MCF 10A (cell line): ENCODE measurements at regions of chr12 and their contacts with region 1.

Region 1: DNA sequence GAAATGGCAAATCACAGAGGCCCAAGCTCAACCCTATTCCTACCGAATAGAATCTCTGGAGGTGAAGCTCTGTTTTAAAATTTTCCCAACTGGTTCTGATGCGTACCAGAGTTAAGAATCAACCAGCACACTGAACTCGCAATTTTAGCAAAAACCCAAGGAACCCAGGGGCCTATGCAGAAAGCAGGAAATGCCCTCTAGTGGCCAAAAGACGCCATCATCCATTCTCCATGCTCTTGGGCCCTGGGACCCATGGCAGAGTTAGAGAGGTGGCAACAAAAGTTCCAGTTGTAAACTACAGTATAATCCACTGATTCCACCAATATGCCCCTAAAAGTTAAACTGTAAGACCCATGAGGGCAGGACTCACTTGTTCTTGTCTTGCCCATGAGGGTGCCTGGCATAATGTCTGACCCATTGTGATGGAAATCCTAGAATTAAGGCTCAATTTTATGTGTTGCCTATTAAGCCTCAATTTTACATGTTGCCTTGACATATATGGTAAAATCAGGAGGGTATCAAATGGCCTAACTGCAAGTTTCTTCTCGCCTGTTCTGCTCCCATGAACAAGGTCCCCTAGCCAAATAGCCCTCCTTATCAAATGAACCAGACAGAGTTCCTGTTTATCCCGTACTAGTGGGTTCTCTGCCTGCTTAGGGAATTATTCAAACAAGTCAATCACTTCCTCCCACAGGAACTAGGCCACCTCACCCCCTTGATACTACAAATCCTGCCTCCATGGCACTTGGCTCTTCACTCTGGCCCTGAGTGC is 137.5 kb upstream of the CPM start:
- DNase-seq: peak; percentile 79
- H3K4me3 Mint-ChIP-seq: no peak overlapping the region
- H3K27ac Mint-ChIP-seq: no peak overlapping the region
- H3K4me1 Mint-ChIP-seq: peaks cover 24% of the 10 kb centered on the region
- H3K27me3 Mint-ChIP-seq: no peaks in the 10 kb centered on the region
- CTCF ChIP-seq: peak; percentile 92

Region 2: DNA sequence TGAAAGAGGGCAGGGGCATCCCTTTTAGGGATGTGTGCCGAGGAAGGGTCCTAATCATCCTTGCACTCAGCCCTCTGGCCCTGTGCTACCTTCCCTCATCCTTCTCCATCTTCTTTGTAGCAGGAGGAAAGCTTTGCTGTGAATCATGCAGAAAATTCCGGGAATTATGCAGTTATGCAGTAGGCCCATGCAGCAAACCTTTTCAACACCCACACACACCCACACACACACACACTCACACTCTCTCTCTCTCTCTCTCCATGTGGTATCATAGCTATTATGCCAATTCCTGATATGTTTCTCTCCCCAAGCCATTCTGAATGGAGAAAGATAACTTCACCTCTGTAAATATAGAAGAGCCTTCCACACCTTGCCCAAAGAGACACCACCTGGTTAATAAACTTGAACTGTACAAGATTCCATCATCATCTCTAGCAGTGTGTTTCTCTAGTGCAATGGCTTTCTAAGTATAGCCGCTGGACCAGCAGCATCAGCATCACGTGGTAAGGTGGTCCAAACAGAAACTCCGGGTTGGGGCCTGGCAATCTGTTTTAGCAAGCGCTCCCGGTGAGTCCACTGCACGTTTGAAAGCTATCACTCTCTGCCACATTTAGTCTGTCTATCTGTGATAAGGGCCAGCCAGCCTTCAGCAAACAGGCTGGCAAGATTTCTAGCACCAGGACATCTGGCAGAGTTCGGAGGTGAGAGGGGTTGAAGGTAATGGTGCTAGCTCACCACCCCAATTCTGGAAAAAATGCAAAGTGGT is 204.9 kb before region 1 on chr12:
- CTCF ChIA-PET with region 1: interaction called, 14 read pairs
- POLR2A ChIA-PET with region 1: interaction called, 3 read pairs
- intact Hi-C with region 1: loop called (anchors 1 kb)
- DNase-seq: no peak
- H3K4me3 Mint-ChIP-seq: no peak overlapping the region
- H3K27ac Mint-ChIP-seq: no peak overlapping the region
- H3K4me1 Mint-ChIP-seq: no peaks in the 10 kb centered on the region
- H3K27me3 Mint-ChIP-seq: no peaks in the 10 kb centered on the region
- CTCF ChIP-seq: no peak

Region 3: GRCh38 chr12:68899251-68899771 is 171.2 kb before region 1 on chr12:
- CTCF ChIA-PET with region 1: interaction called, 87 read pairs
- POLR2A ChIA-PET with region 1: interaction called, 12 read pairs
- intact Hi-C with region 1: loop called (anchors 1 kb)
- DNase-seq: peak; percentile 84
- H3K4me3 Mint-ChIP-seq: no peak overlapping the region
- H3K27ac Mint-ChIP-seq: peak overlapping the region; percentile 72
- H3K4me1 Mint-ChIP-seq: peaks cover 8% of the 10 kb centered on the region
- H3K27me3 Mint-ChIP-seq: no peaks in the 10 kb centered on the region
- CTCF ChIP-seq: peak; percentile 78

Region 4: DNA sequence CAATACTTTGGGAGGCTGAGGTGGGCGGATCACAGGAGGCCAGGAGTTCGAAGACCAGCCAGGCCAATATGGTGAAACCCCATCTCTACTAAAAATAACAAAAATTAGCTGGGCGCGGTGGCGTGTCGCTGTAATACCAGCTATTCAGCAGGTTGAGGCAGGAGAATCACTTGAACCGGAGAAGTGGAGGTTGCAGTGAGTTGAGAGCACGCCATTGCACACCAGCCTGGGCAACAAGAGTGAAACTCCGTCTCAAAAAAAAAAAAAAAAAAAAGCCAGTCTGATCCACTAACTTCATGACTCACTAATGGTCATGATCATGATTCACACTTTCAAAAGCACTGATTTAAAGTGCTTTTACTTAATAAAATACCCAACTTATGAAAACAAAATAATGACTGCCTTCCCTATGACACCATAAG is 99.1 kb before region 1 on chr12:
- CTCF ChIA-PET with region 1: interaction called, 4 read pairs
- POLR2A ChIA-PET with region 1: interaction called, 6 read pairs
- intact Hi-C with region 1: loop called (anchors 2 kb)
- DNase-seq: peak; percentile 60
- H3K4me3 Mint-ChIP-seq: peak overlapping the region; percentile 58
- H3K27ac Mint-ChIP-seq: peak overlapping the region; percentile 19
- H3K4me1 Mint-ChIP-seq: peaks cover 17% of the 10 kb centered on the region
- H3K27me3 Mint-ChIP-seq: no peaks in the 10 kb centered on the region
- CTCF ChIP-seq: no peak

Region 5: DNA sequence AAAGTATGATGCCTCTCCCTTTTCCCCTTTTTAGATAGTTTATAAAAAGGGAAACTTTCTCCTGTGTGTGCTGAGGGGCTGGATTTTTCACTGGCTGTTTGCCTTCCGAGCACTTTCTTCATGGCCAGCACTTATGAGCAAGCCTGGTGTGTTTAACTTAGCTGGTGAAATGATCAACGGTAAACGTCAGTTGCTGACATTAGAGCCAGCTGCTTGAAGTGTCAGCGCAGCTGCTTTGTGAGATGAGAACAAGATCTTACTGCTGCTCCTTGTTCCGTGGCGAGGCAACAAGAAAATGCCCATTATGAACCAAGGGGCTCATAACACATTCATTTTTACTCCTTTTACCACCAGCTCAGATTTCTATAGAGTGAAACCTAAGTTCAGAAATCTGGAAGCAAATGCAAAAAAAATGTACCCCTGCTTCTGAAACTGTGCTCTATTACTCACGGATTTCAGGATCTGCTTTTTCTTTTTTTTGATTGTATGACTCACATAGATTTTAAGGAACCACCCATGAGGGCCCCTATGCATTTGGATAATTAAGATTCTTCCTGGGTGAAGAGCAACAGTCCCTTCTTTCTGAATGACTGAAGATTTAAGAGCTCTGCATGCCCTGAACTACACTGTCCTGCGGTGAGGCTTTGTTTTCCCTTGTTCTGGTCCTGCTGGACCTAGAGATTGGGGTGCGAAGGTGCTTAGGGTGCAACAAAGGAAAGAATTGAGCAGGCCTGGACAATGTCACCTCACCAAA is 63.2 kb before region 1 on chr12:
- CTCF ChIA-PET with region 1: interaction called, 10 read pairs
- POLR2A ChIA-PET with region 1: interaction called, 10 read pairs
- intact Hi-C with region 1: no loop called
- DNase-seq: peak; percentile 53
- H3K4me3 Mint-ChIP-seq: peak overlapping the region; percentile 39
- H3K27ac Mint-ChIP-seq: peak overlapping the region; percentile 82
- H3K4me1 Mint-ChIP-seq: peaks cover 24% of the 10 kb centered on the region
- H3K27me3 Mint-ChIP-seq: no peaks in the 10 kb centered on the region
- CTCF ChIP-seq: no peak

Region 6: DNA sequence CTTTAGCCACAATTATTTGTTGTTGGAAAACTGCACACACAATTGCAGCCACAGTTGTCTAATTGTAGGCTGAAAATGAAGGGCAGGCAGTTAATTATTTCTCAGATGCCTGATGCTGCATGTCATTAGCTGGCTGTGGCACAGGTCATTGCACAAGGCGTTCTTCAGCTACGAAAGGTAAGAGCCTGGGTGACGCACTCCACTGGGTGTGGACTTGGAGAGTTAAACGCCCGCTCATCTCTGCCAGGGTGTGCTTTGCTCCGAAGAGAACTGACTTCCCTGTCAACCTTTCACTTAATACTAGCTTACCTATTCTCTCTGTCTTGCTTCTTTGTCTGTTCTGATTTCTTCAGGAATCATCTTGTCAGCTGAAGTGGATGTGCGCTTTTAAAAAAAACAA is 46.1 kb before region 1 on chr12:
- CTCF ChIA-PET with region 1: interaction called, 5 read pairs
- POLR2A ChIA-PET with region 1: interaction called, 12 read pairs
- intact Hi-C with region 1: loop called (anchors 5 kb)
- DNase-seq: peak; percentile 96
- H3K4me3 Mint-ChIP-seq: peak overlapping the region; percentile 61
- H3K27ac Mint-ChIP-seq: peak overlapping the region; percentile 88
- H3K4me1 Mint-ChIP-seq: peaks cover 35% of the 10 kb centered on the region
- H3K27me3 Mint-ChIP-seq: no peaks in the 10 kb centered on the region
- CTCF ChIP-seq: no peak

Region 7: DNA sequence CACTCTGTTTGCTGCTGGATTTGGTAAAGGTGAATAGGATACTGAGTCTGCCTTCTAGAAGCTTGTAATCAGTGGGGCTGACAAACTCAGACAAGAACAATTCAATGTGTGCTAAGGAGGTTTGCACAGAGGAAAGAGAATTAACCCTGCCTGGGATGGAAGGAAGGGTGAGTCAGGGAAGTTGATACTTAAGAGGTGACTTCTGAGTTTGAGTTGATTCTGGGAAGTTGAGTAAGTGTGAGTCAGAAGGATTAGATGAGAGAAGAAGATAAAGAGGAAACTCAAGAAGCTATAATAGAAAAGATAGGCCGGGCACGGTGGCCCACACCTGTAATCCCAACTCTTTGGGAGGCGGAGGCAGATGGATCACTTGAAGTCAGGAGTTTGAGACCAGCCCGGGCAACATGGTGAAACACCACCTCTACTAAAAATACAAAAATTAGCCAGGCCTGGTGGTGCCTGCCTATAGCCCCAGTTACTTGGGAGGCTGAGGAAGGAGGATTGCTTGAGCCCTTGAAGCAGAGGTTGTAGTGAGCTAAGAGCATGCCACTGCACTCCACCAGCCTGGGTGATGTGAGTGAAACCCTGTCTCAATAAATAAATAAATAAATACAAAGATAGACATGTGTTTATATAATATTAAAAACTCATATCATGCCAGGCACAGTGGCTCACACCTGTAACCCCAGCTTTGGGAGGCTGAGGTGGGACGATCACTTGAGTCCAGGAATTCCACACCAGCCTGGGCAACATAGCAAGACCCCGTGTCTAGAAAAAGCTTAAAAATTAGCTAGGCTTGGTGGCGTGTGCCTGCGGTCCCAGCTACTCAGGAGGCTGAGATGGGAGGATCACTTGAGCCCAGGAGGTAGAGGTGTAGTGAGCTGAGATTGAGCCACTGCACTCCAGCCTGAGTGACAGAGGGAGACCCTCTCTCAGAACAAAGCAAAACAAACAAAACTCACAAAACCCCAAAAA is 10.7 kb before region 1 on chr12:
- CTCF ChIA-PET with region 1: interaction called, 14 read pairs
- POLR2A ChIA-PET with region 1: interaction called, 4 read pairs
- intact Hi-C with region 1: no loop called
- DNase-seq: peak; percentile 93
- H3K4me3 Mint-ChIP-seq: no peak overlapping the region
- H3K27ac Mint-ChIP-seq: peak overlapping the region; percentile 14
- H3K4me1 Mint-ChIP-seq: peaks cover 15% of the 10 kb centered on the region
- H3K27me3 Mint-ChIP-seq: no peaks in the 10 kb centered on the region
- CTCF ChIP-seq: no peak

Region 8: DNA sequence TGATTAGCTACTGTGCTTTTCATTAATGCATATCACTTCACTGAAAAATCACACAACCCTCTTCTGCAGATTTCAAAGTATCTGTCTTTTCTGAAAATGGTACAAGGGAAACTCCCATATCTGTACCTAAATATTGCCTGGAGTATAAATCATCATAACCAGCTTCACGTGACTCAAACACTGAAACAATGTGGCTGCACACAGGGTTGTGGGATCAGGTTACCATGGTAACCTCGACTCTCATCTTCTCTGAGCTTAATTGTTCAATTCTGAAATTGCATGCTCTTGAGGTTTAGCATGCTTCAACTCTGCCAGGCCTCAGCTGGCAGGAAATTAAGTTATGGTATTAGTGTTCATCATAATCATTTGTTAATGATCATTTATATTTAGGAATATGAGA is 91.3 kb after region 1 on chr12:
- CTCF ChIA-PET with region 1: no interaction called
- POLR2A ChIA-PET with region 1: no interaction called
- intact Hi-C with region 1: no loop called
- DNase-seq: no peak
- H3K4me3 Mint-ChIP-seq: no peak overlapping the region
- H3K27ac Mint-ChIP-seq: no peak overlapping the region
- H3K4me1 Mint-ChIP-seq: no peaks in the 10 kb centered on the region
- H3K27me3 Mint-ChIP-seq: no peaks in the 10 kb centered on the region
- CTCF ChIP-seq: no peak